Transverse colon (tissue), 4 donors: ENCODE measurements at regions of chr20 and their contacts with region 1.

Region 1: DNA sequence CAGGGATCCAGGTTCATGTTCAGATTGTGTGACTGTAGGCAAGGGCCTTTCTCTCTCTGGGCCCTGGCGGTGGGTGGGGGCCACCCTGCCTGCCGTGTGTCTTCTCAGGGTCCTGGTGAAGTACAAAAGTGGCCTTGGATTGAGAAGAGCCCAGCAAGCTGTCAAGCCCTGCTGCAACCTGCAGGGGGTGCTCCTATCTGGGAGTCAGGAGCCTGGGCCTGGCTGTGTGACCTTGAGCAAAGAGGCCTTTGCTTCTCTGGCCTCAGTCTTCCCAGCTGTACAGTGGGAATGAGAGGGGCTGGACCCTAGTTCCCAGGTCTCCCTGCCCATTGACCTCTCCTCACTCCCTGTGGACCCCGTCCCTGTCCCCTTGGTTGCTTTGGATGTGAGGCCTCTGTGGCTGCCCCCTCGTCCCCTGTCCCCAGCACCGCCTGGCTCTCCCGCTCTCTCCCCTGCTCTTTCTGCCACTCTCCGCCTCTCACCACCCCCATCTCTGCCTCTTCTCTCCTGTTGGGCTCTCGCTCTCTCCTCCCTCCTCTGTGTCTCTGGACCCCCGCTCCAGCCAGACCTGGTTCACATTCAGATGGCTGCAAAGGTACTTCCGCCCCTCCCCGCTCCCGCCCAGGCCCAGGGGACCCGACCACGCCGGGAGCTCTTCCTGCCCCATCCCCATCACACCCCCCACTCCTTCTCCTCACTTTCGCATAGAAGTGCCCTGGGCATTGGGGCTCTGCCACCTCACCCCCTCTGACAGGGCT is 46.7 kb downstream of the SRC start:
- DNase-seq: no peak
- H3K4me3 ChIP-seq: no peak overlapping the region
- H3K27ac ChIP-seq: no peak overlapping the region
- H3K4me1 ChIP-seq: peaks cover 0 to 5% (median 0%) of the 10 kb centered on the region in 4 donors
- H3K27me3 ChIP-seq: no peaks in the 10 kb centered on the region
- CTCF ChIP-seq: no peak
- EP300 ChIP-seq: no peak
- POLR2A ChIP-seq: no peak

Region 2: GRCh38 chr20:37276494-37277252 is 115.9 kb before region 1 on chr20:
- in situ Hi-C with region 1: loop called in 3 of 4 experiments (anchors 5 to 10 kb)
- intact Hi-C with region 1: loop called (anchors 5 kb)
- DNase-seq: peak; percentile 56
- H3K4me3 ChIP-seq: no peak overlapping the region
- H3K27ac ChIP-seq: peak overlapping the region; percentile 38 to 66 (median 58)
- H3K4me1 ChIP-seq: peaks cover 5 to 20% (median 8%) of the 10 kb centered on the region in 4 donors
- H3K27me3 ChIP-seq: no peaks in the 10 kb centered on the region
- CTCF ChIP-seq: peak in 2 of 5 experiments; percentile 26 to 40
- EP300 ChIP-seq: no peak
- POLR2A ChIP-seq: no peak

Region 3: DNA sequence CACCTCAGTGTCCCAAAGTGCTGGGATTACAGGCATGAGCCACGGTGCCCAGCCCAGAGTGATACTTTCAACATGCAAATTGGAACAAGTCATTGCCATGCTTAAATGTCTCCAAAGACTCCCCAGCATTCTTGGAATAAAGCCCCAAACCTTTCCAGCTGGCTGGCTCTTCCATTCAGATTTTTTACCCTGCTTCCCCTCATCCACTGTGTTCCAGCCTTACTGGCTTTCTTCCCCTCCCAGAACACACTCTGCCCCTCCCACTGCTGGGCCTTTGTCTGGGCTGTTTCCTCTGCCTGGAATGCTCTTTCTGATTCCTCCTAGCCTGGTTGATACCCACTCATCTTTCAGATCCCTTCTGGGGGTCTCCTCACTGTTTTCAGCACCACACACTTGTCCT is 88.3 kb after region 1 on chr20:
- in situ Hi-C with region 1: no loop called
- intact Hi-C with region 1: no loop called
- DNase-seq: no peak
- H3K4me3 ChIP-seq: no peak overlapping the region
- H3K27ac ChIP-seq: no peak overlapping the region
- H3K4me1 ChIP-seq: no peaks in the 10 kb centered on the region
- H3K27me3 ChIP-seq: no peaks in the 10 kb centered on the region
- CTCF ChIP-seq: no peak
- EP300 ChIP-seq: no peak
- POLR2A ChIP-seq: no peak

Region 4: DNA sequence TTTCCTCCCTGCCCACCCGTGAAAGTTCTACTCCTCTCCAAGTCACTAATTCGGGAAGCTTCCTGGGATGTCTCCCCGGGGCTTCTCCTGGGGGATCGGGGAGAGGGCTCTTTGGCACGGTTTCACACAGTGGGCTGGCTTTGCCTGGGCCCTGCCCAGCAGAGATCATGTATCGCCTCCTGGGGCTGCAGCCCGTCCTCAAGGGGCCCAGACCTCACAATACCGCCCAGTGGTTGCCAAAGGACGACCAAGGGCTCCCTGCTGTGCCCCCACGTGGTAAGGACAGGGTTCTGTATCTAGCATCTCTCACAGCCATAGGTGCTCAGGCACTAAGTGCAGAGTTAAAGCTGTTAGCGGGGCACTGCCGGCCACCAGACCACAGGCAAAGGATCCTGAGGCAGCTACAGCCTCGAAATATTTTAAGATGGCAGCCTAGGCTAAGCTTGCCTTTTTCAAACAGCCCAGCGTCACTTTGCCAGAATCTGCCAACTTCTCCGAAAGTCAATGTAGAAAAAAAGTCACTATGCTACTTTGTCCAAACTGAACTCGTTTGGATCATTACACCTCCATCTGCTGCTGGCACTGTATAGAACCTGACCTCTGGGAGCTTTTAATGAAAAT is 127.0 kb after region 1 on chr20:
- in situ Hi-C with region 1: loop called in 1 of 4 experiments (anchors 10 kb)
- intact Hi-C with region 1: no loop called
- DNase-seq: peak; percentile 8
- H3K4me3 ChIP-seq: no peak overlapping the region
- H3K27ac ChIP-seq: peak overlapping the region; percentile 64 to 93 (median 77)
- H3K4me1 ChIP-seq: peaks cover 10 to 78% (median 51%) of the 10 kb centered on the region in 4 donors
- H3K27me3 ChIP-seq: no peaks in the 10 kb centered on the region
- CTCF ChIP-seq: no peak
- EP300 ChIP-seq: no peak
- POLR2A ChIP-seq: no peak